HEK293 (cell line): ENCODE measurements at regions of chr16 and their contacts with region 1.

Region 1: DNA sequence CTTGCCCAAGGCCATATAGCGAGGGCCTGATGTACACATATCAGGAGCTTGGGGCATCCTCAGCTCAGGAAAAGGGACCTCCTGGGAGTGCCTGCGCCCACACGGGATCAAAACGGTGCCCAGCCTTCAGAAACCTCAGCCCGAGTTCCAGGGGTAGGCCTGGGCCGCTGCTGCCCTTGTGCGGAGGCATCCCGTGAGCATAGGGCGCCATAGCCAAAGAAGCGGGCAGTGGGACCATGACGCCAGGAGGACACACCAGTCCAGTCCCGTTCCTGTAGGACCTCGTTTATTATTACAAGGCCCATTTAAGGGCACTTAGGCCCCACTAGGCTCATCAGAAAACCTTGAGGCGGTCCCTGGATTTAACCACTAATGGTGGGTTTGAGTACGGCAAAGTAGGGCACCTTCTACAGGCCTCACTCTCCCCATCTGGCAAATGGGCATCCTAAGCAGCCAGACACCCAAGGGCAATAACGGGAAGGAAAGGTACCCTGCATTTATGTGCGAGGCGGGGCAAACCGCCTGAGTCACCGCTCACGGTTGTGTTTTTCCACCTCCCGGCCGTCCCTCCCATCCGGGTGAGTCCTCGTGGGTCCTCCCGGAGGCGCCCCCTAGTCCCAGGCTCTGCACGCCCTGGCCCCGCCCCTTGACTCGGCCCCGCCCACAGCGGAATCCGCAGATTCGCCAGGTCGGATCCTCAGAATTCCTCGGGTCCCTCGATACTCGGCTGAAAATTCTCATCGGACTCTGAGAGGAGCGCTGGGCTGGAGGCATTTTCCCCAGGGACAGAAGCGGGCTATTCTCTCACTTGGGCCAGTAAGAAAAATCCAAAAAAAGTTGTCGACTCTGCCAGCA is 726 bp upstream of the SETD1A start:
- H3K4me3 ChIP-seq: peak overlapping the region; percentile 90
- H3K27ac ChIP-seq: peak overlapping the region; percentile 96
- H3K4me1 ChIP-seq: peaks cover 2% of the 10 kb centered on the region; the same call in 1 of the 2 replicates
- CTCF ChIP-seq: peak; percentile 86

Region 2: DNA sequence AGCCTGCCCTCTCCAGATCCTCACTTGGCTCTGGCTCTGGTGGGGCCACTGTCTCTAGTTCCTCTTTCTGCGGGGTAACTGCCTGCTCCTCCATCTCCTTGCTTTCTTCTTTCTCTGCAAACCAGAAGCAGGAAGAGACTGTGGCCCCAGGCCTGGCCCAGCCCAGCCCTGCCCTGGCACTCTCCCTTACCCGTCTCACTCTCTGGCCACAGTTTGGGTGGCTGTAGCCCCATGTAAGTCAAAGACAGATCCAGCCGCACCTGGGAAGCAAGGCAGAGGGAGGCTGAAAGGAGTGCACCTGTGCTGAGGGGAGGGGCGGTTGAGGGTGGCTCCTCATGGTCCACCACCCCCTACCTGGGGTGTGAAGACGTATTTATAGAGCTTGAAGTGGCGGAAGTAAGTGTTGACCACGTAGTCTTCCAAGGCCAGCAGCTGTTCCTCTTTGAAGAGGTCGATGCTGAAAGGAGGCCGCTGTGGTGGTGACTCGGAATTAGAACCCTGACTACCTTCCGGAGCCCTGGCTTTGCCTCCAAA is 197.8 kb before region 1 on chr16:
- CTCF ChIA-PET with region 1: no interaction called
- POLR2A ChIA-PET with region 1: no interaction called
- H3K4me3 ChIP-seq: no peak overlapping the region
- H3K27ac ChIP-seq: no peak overlapping the region
- H3K4me1 ChIP-seq: peaks cover 4% of the 10 kb centered on the region; the same call in 1 of the 2 replicates
- CTCF ChIP-seq: no peak

Region 3: DNA sequence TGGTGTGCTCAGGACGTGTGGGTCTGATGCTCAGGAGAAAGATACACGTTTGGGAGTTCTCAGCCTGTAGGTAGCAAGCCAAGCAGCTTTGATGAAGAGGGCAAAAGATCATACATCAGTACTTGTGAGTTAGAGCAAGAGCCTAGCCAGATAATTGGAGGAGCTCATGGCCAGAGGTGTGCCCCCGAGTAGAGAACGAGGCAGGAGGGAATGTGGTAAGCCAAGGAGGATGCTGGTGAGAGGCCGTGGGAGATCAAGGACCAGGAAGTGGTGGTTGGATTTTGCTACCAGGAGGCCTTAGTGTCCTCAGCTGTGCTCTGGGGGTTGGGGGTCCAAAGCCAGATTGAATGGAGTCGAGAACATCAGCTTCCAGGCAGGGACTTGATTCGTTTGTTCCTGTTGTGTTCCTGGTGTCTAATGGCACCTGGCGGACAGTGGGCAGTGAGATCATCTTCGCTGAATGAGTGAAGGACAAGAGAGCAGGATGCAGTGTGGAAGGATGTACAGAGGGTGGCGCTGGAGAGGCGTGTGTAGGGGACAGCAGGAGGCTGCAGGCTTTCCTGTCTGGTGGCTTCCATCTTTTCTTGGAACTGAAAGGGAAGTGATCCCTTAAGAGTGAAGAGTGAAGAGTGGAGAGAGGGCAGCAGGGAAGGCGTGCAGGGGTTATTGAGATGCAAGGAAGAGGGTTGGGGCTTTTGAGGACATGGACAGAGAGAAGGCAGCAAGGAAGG is 21.8 kb before region 1 on chr16:
- CTCF ChIA-PET with region 1: interaction called, 74 read pairs
- POLR2A ChIA-PET with region 1: interaction called, 3 read pairs
- H3K4me3 ChIP-seq: no peak overlapping the region
- H3K27ac ChIP-seq: no peak overlapping the region
- H3K4me1 ChIP-seq: no peaks in the 10 kb centered on the region
- CTCF ChIP-seq: peak; percentile 82

Region 4: GRCh38 chr16:30941600-30942425 is 15.0 kb before region 1 on chr16:
- CTCF ChIA-PET with region 1: interaction called, 74 read pairs
- POLR2A ChIA-PET with region 1: interaction called, 10 read pairs
- H3K4me3 ChIP-seq: no peak overlapping the region
- H3K27ac ChIP-seq: no peak overlapping the region
- H3K4me1 ChIP-seq: no peaks in the 10 kb centered on the region
- CTCF ChIP-seq: peak; percentile 85

Region 5: GRCh38 chr16:30984669-30985400 is 28.0 kb after region 1 on chr16 and contains the start of gene HSD3B7:
- CTCF ChIA-PET with region 1: interaction called, 25 read pairs
- POLR2A ChIA-PET with region 1: interaction called, 5 read pairs
- H3K4me3 ChIP-seq: no peak within 1 kb of the TSS
- H3K27ac ChIP-seq: no peak within 1 kb of the TSS
- H3K4me1 ChIP-seq: no peaks in the 10 kb centered on the region
- CTCF ChIP-seq: peak; percentile 93

Region 6: DNA sequence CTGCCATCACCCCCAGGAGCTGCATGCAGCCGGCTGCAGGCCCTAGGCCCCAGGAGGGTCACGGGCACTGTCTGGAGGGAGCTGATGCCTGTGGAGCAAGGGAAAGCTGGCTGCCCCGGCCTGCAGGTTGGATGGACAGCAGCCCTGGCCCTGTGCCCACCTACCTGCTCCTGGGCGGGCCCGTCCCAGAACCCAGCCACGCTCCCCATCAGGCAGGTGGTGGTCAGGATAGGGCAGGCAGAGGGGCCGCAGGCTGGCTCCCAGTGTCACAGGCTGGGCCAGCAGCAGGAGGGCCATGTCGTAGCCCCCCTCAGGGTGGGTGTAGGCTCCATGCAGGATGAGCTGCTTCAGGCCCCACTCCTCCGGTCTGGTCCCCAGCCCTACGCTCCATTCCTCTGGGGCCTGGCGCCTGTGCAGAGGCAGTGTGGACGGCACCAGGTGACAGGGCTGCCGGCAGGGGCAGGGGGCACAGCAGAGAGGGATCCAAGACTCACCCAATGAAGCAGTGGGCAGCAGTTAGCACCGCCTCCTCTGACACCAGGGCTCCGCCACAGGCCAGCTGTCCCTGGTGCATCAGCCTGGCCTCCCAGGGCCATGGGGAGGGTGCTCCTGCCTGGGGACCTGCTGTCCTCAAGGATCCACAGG is 127.9 kb after region 1 on chr16:
- CTCF ChIA-PET with region 1: no interaction called
- POLR2A ChIA-PET with region 1: no interaction called
- H3K4me3 ChIP-seq: no peak overlapping the region
- H3K27ac ChIP-seq: no peak overlapping the region
- H3K4me1 ChIP-seq: no peaks in the 10 kb centered on the region
- CTCF ChIP-seq: no peak

Region 7: DNA sequence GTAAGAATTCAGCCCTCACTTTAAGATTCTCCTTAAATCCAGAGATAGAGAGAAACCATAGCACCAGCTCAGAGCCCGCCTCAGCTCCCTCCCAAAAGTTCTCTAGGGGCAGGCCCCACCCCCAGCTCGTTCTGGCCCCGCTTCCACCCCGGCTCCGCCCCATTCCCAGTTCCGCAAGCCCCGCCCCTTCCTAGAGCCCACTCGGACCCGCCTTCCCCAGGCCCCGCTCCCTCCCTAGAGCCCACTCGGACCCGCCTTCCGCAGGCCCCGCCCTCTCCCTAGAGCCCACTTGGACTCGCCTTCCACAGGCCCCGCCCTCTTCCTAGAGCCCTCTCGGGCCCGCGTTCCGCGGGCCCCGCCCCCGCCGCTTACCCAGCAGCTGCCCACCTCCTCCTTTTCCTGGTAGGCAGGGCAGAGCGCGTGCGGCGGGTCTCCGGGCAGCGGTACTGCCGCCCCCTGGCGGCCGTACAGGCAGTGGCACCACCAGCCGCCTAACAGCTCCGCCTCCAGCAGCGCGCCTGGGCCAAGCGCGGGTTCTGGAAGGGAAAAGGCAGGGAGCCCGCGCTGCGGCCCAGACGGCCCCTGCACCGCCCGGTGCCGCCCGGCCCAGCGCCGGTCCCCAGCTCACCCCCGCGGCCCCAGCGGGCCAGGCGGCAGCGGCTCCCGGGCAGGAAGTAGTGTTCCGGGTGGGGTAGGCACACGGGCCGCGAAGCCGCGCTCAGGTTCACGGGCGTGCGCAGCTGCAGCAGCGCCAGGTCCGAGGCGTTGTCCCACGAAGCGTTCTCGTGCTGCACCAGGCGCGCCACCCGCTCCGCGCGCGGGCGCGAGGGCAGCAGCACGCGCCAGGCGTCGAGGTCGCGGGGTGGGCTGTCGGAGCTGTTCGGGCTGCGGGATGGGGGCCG is 185.5 kb after region 1 on chr16:
- CTCF ChIA-PET with region 1: interaction called, 20 read pairs
- POLR2A ChIA-PET with region 1: interaction called, 3 read pairs
- H3K4me3 ChIP-seq: peak overlapping the region; percentile 27
- H3K27ac ChIP-seq: peak overlapping the region; percentile 63; the same call in 1 of the 2 replicates
- H3K4me1 ChIP-seq: no peaks in the 10 kb centered on the region; the same call in 1 of the 2 replicates
- CTCF ChIP-seq: peak; percentile 96

Region 8: DNA sequence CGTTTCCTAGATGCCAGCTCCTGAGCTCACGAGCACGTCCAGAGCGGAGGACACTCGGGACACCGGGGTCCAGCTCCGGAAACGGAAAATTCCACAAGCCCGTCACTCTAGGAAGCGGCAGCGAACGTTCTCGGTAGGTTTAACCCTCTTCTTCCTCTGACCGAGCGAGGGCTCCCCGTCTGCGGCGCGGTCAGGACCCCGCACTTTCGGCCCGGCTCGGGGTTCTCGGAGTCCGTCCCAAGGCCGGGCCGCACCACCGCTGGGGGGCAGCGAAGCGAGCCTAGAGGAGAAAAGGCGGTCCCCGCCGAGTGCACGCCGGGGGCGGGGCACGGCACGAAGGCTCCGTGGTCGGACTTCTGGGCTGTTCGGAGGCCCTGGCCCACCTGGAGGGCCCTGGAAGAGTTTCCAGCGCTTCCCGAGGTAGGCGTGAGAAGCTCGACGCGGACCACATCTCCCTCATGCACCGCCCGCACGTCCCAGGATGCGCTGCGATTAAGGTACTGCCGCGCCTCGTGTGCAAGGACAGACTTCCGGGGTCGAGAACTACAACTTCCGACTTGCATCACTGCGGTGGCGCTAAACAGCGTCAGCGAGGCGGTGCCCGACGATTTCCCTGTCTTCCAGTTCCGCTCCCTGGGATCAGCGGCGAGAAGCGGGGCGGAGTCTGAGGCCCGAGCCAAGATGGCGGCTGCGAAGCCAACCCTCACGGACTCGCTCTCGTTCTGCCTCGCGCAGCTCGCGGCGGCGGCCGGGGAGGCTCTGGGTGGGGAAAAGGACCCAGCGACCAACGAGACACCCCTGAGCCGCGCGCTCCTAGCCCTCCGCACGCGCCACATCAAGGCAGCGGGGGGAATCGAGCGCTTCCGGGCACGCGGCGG is 502.3 kb after region 1 on chr16 and contains the start of gene ARMC5:
- CTCF ChIA-PET with region 1: interaction called, 10 read pairs
- POLR2A ChIA-PET with region 1: interaction called, 3 read pairs
- H3K4me3 ChIP-seq: peak within 1 kb of the TSS; percentile 85
- H3K27ac ChIP-seq: peak within 1 kb of the TSS; percentile 83
- H3K4me1 ChIP-seq: peaks cover 5% of the 10 kb centered on the region
- CTCF ChIP-seq: peak; percentile 89